ENCODE measurements at regions of chr12 and their contacts with region 1.

Region 1: GRCh38 chr12:118330421-118331018 is 42.2 kb downstream of the TAOK3 start:
- DNase-seq: peak; percentile 89
- ATAC-seq: peak; percentile 85
- H3K4me3 ChIP-seq: no peak overlapping the region
- H3K27ac ChIP-seq: peak overlapping the region; percentile 59; the same call in 1 of the 2 replicates
- H3K4me1 ChIP-seq: peaks cover 15% of the 10 kb centered on the region
- H3K27me3 ChIP-seq: no peaks in the 10 kb centered on the region
- CTCF ChIP-seq: no peak
- POLR2A ChIP-seq: no peak
- RAD21 ChIP-seq: no peak

Region 2: DNA sequence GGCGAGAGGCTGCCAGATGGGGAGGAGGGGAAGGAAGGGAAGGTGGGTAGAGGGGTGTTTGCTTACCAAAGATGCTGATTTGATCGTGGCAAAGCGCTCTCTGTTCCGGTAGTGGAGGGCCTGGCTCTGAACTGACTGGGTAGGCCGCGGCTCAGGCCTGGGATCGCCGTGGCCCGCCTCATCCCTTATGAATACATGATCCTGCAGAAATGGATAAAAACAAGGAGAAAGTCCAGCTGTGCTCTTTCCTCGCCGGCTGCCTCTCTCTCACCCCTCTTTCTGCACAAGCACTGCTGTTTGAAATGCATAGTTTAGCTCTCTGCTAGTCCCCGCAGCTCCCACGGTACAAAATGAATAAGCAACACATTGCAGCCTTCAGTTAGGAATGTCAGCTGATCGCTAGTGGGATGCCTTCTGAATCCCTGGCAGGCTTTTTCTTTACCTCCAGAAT is 140.8 kb before region 1 on chr12:
- CTCF ChIA-PET with region 1: no interaction called
- POLR2A ChIA-PET with region 1: interaction called, 20 read pairs
- dilution Hi-C with region 1: no loop called
- in situ Hi-C with region 1: no loop called
- intact Hi-C with region 1: no loop called
- DNase-seq: peak; percentile 82
- ATAC-seq: peak; percentile 78
- H3K4me3 ChIP-seq: peak overlapping the region; percentile 56
- H3K27ac ChIP-seq: peak overlapping the region; percentile 100
- H3K4me1 ChIP-seq: no peaks in the 10 kb centered on the region
- H3K27me3 ChIP-seq: no peaks in the 10 kb centered on the region
- CTCF ChIP-seq: no peak
- POLR2A ChIP-seq: no peak
- RAD21 ChIP-seq: no peak

Region 3: GRCh38 chr12:118259079-118259478 is 71.4 kb before region 1 on chr12:
- CTCF ChIA-PET with region 1: no interaction called
- POLR2A ChIA-PET with region 1: no interaction called
- dilution Hi-C with region 1: no loop called
- in situ Hi-C with region 1: no loop called
- intact Hi-C with region 1: no loop called
- DNase-seq: peak; percentile 25
- ATAC-seq: no peak
- H3K4me3 ChIP-seq: no peak overlapping the region
- H3K27ac ChIP-seq: peak overlapping the region; percentile 29; the same call in 1 of the 2 replicates
- H3K4me1 ChIP-seq: peaks cover 3% of the 10 kb centered on the region
- H3K27me3 ChIP-seq: no peaks in the 10 kb centered on the region
- CTCF ChIP-seq: no peak
- POLR2A ChIP-seq: no peak
- RAD21 ChIP-seq: no peak

Region 4: GRCh38 chr12:118315821-118316220 is 14.7 kb before region 1 on chr12:
- CTCF ChIA-PET with region 1: interaction called, 3 read pairs
- POLR2A ChIA-PET with region 1: no interaction called
- dilution Hi-C with region 1: no loop called
- in situ Hi-C with region 1: no loop called
- intact Hi-C with region 1: loop called (anchors 2 kb)
- DNase-seq: no peak
- ATAC-seq: no peak
- H3K4me3 ChIP-seq: no peak overlapping the region
- H3K27ac ChIP-seq: no peak overlapping the region
- H3K4me1 ChIP-seq: no peaks in the 10 kb centered on the region; the same call in none of the 2 replicates
- H3K27me3 ChIP-seq: no peaks in the 10 kb centered on the region
- CTCF ChIP-seq: no peak
- POLR2A ChIP-seq: no peak
- RAD21 ChIP-seq: no peak